Endothelial cell of umbilical vein (primary cell): ENCODE measurements at regions of chr13 and their contacts with region 1.

Region 1: GRCh38 chr13:106117035-106117434 is 418.4 kb downstream of the EFNB2 start:
- DNase-seq: peak; percentile 93
- H3K4me3 ChIP-seq: no peak overlapping the region
- H3K27ac ChIP-seq: peak overlapping the region; percentile 74
- H3K4me1 ChIP-seq: peaks cover 52% of the 10 kb centered on the region
- H3K27me3 ChIP-seq: no peaks in the 10 kb centered on the region
- CTCF ChIP-seq: no peak
- POLR2A ChIP-seq: no peak

Region 2: DNA sequence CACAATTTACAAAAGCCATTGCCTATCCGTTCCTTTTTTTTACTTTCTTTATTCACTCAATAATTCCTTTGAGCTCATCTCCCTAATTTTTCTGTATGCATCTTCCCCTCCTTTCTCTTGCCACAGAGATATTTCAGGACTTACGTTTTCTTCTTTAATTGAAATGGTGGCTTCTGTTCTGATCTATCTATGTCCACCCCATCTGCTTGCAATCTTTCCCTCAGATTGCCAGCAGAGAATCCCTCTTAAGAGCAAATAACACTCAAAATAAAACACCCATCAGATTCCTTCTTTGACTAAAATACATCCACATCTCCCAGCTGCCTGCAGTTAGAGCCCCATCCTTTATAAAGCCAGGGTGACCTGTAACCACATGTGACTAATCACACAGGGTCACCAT is 60.2 kb before region 1 on chr13:
- CTCF ChIA-PET with region 1: no interaction called
- POLR2A ChIA-PET with region 1: no interaction called
- dilution Hi-C with region 1: no loop called
- intact Hi-C with region 1: no loop called
- DNase-seq: no peak
- H3K4me3 ChIP-seq: no peak overlapping the region
- H3K27ac ChIP-seq: no peak overlapping the region
- H3K4me1 ChIP-seq: no peaks in the 10 kb centered on the region
- H3K27me3 ChIP-seq: peaks cover 0 to 1% of the 10 kb centered on the region in 2 experiments
- CTCF ChIP-seq: no peak
- POLR2A ChIP-seq: no peak

Region 3: GRCh38 chr13:106072014-106072413 is 45.0 kb before region 1 on chr13:
- CTCF ChIA-PET with region 1: no interaction called
- POLR2A ChIA-PET with region 1: no interaction called
- dilution Hi-C with region 1: no loop called
- intact Hi-C with region 1: no loop called
- DNase-seq: no peak
- H3K4me3 ChIP-seq: no peak overlapping the region
- H3K27ac ChIP-seq: no peak overlapping the region
- H3K4me1 ChIP-seq: peaks cover 3% of the 10 kb centered on the region
- H3K27me3 ChIP-seq: peaks cover 0 to 6% of the 10 kb centered on the region in 2 experiments
- CTCF ChIP-seq: no peak
- POLR2A ChIP-seq: no peak

Region 4: DNA sequence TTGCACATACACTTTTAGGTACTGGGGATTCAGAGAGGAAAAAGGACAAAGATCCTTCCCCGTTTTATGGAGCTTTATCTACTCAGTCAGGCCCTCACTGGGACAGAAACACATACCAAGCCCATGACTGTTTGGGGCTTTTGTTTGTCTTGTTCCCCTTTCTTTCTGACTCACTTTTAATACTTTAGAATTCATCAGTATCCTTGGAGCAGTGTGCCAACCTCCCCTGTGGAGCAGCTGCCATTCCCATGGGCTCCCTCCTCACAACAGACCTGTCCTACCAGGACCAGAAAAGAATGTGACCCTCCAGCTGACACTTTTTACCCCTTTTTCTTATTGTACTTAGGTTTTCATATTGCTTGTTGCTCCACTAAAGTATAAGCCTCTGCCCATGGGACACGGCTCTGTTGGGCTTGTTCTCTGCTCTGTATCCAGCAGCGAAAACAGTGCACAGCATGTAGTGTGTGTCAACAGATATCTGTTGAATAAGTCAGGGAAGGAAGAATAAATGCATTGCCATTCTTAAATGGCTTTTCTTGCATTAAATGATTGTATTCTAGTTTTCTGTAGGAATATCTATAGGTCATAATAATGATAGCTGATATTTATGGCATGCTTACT is 12.6 kb before region 1 on chr13:
- CTCF ChIA-PET with region 1: interaction called, 16 read pairs
- POLR2A ChIA-PET with region 1: no interaction called
- dilution Hi-C with region 1: no loop called
- intact Hi-C with region 1: loop called (anchors 1 kb)
- DNase-seq: peak; percentile 83
- H3K4me3 ChIP-seq: no peak overlapping the region
- H3K27ac ChIP-seq: peak overlapping the region; percentile 68
- H3K4me1 ChIP-seq: peaks cover 28% of the 10 kb centered on the region
- H3K27me3 ChIP-seq: no peaks in the 10 kb centered on the region
- CTCF ChIP-seq: no peak
- POLR2A ChIP-seq: no peak

Region 5: GRCh38 chr13:106133025-106133424 is 16.0 kb after region 1 on chr13:
- CTCF ChIA-PET with region 1: interaction called, 3 read pairs
- POLR2A ChIA-PET with region 1: no interaction called
- dilution Hi-C with region 1: no loop called
- intact Hi-C with region 1: loop called (anchors 1 kb)
- DNase-seq: peak; percentile 77
- H3K4me3 ChIP-seq: no peak overlapping the region
- H3K27ac ChIP-seq: peak overlapping the region; percentile 15
- H3K4me1 ChIP-seq: peaks cover 14% of the 10 kb centered on the region
- H3K27me3 ChIP-seq: no peaks in the 10 kb centered on the region
- CTCF ChIP-seq: no peak
- POLR2A ChIP-seq: no peak

Region 6: GRCh38 chr13:106493533-106494220 is 376.6 kb after region 1 on chr13:
- CTCF ChIA-PET with region 1: no interaction called
- POLR2A ChIA-PET with region 1: no interaction called
- dilution Hi-C with region 1: no loop called
- intact Hi-C with region 1: loop called (anchors 10 kb)
- DNase-seq: no peak
- H3K4me3 ChIP-seq: no peak overlapping the region
- H3K27ac ChIP-seq: no peak overlapping the region
- H3K4me1 ChIP-seq: peaks cover 35% of the 10 kb centered on the region
- H3K27me3 ChIP-seq: no peaks in the 10 kb centered on the region
- CTCF ChIP-seq: no peak
- POLR2A ChIP-seq: no peak